ENCODE measurements at regions of chr5 and their contacts with region 1.

Region 1: DNA sequence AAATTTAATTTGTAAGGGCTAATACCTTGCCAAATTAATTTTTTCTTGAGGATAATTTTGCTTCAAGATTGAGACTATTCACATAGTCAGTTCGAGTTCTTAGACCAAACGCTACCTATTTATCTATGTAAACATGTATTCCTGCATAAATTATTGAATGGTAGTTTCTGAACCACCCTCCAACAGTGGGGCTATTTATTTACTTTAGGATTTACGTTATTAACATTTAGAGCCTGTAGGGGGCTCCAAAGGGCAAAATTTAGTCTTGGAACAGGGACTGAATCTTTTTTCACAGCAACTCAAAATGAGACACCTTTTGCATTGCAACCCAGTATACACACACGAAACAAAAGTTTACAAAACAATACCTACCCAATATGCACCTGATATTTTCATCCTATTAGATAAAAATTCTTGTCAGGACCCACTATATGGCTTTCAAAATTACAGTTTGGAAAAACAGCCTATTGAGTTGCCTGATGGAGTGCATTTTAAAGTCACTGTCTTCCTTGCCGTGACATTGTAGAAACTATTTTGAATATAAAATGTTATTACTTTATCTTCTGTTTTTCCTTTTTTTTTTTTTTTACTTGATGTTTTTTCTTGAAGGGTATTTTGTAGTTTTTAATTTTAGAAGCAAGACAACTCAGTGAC is 47.1 kb upstream of the POU4F3 start:
- DNase-seq: peak in 4 of 5 donors; percentile 12 to 36 (median 30)
- H3K4me3 ChIP-seq: no peak overlapping the region
- H3K4me3 Mint-ChIP-seq: no peak overlapping the region
- H3K27ac ChIP-seq: no peak overlapping the region
- H3K27ac Mint-ChIP-seq: no peak overlapping the region
- H3K4me1 ChIP-seq: no peaks in the 10 kb centered on the region
- H3K4me1 Mint-ChIP-seq: no peaks in the 10 kb centered on the region
- H3K27me3 ChIP-seq: no peaks in the 10 kb centered on the region
- H3K27me3 Mint-ChIP-seq: no peaks in the 10 kb centered on the region

Region 2: DNA sequence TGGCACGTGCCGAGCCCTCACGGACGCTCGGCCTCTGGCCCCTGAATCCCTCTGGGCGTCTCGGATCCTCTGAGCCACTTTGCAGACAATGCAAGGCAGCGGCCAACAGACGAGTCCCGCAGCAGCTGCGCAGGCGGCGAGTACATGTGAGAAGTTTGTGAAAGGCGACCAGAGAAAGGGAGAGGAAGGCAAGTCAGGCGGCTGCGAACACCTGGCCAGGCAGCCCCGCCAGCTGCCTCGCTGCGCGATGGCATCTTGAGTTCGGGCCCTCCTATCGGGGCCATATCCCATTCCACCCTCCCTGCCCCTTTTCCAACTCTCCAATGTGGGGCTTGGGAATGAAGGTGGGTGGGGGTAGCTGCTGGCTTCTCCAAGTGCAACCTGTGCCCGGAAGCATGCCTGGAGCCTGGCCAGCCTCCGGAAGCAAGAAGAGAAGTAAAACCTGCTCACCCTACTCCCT is 42.6 kb after region 1 on chr5:
- CTCF ChIA-PET with region 1: no interaction called
- POLR2A ChIA-PET with region 1: no interaction called
- intact Hi-C with region 1: no loop called
- DNase-seq: peak in 1 of 5 donors; percentile 27
- H3K4me3 ChIP-seq: no peak overlapping the region
- H3K4me3 Mint-ChIP-seq: no peak overlapping the region
- H3K27ac ChIP-seq: no peak overlapping the region
- H3K27ac Mint-ChIP-seq: no peak overlapping the region
- H3K4me1 ChIP-seq: no peaks in the 10 kb centered on the region
- H3K4me1 Mint-ChIP-seq: peaks cover 0 to 6% (median 1%) of the 10 kb centered on the region in 4 donors
- H3K27me3 ChIP-seq: peaks cover 12% of the 10 kb centered on the region
- H3K27me3 Mint-ChIP-seq: peaks cover 53 to 62% of the 10 kb centered on the region in 2 donors

Region 3: GRCh38 chr5:146426853-146427618 is 135.5 kb after region 1 on chr5:
- CTCF ChIA-PET with region 1: interaction called, 8 read pairs
- POLR2A ChIA-PET with region 1: no interaction called
- intact Hi-C with region 1: loop called (anchors 1 kb)
- DNase-seq: peak in 4 of 5 donors; percentile 30 to 47 (median 37)
- H3K4me3 ChIP-seq: no peak overlapping the region
- H3K4me3 Mint-ChIP-seq: no peak overlapping the region
- H3K27ac ChIP-seq: no peak overlapping the region
- H3K27ac Mint-ChIP-seq: no peak overlapping the region
- H3K4me1 ChIP-seq: no peaks in the 10 kb centered on the region
- H3K4me1 Mint-ChIP-seq: peaks cover 3 to 5% (median 4%) of the 10 kb centered on the region in 4 donors
- H3K27me3 ChIP-seq: no peaks in the 10 kb centered on the region
- H3K27me3 Mint-ChIP-seq: peaks cover 11 to 15% of the 10 kb centered on the region in 2 donors

Region 4: DNA sequence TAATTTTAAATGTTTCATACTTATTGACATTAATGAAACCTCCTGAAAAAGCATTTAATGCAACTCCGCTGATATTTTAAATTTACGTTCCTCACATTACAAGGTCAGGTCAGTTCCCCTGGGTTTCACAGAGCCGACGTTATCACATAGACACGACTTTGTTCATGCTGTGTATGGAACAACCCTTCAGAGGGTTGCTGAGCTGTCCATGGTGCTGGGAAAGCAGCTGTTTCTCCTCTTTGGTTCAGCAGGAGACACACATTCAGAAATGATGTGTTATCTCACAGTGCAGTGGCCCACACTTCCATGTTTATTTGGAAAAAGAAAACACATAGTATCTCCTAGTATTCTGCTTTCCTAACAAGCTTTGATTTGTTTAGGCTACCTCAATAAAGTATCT is 533.5 kb after region 1 on chr5:
- CTCF ChIA-PET with region 1: no interaction called
- POLR2A ChIA-PET with region 1: no interaction called
- intact Hi-C with region 1: no loop called
- DNase-seq: peak in 1 of 5 donors; percentile 2
- H3K4me3 ChIP-seq: no peak overlapping the region
- H3K4me3 Mint-ChIP-seq: no peak overlapping the region
- H3K27ac ChIP-seq: no peak overlapping the region
- H3K27ac Mint-ChIP-seq: no peak overlapping the region
- H3K4me1 ChIP-seq: no peaks in the 10 kb centered on the region
- H3K4me1 Mint-ChIP-seq: peaks cover 0 to 5% (median 0%) of the 10 kb centered on the region in 4 donors
- H3K27me3 ChIP-seq: no peaks in the 10 kb centered on the region
- H3K27me3 Mint-ChIP-seq: no peaks in the 10 kb centered on the region

Region 5: GRCh38 chr5:147188200-147189108 is 896.9 kb after region 1 on chr5:
- CTCF ChIA-PET with region 1: no interaction called
- POLR2A ChIA-PET with region 1: no interaction called
- intact Hi-C with region 1: no loop called
- DNase-seq: peak; percentile 44 to 59 (median 59)
- H3K4me3 ChIP-seq: no peak overlapping the region
- H3K4me3 Mint-ChIP-seq: peak overlapping the region in 2 of 8 donors; percentile 43 to 73
- H3K27ac ChIP-seq: no peak overlapping the region
- H3K27ac Mint-ChIP-seq: peak overlapping the region in 1 of 7 donors; percentile 39
- H3K4me1 ChIP-seq: peaks cover 6% of the 10 kb centered on the region
- H3K4me1 Mint-ChIP-seq: peaks cover 4 to 7% (median 5%) of the 10 kb centered on the region in 4 donors
- H3K27me3 ChIP-seq: no peaks in the 10 kb centered on the region
- H3K27me3 Mint-ChIP-seq: peaks cover 3 to 8% of the 10 kb centered on the region in 2 donors

Measured in CD4-positive, alpha-beta memory T cell (primary cell).